AG04450 (cell line): ENCODE measurements at regions of chr15 and their contacts with region 1.

Region 1: DNA sequence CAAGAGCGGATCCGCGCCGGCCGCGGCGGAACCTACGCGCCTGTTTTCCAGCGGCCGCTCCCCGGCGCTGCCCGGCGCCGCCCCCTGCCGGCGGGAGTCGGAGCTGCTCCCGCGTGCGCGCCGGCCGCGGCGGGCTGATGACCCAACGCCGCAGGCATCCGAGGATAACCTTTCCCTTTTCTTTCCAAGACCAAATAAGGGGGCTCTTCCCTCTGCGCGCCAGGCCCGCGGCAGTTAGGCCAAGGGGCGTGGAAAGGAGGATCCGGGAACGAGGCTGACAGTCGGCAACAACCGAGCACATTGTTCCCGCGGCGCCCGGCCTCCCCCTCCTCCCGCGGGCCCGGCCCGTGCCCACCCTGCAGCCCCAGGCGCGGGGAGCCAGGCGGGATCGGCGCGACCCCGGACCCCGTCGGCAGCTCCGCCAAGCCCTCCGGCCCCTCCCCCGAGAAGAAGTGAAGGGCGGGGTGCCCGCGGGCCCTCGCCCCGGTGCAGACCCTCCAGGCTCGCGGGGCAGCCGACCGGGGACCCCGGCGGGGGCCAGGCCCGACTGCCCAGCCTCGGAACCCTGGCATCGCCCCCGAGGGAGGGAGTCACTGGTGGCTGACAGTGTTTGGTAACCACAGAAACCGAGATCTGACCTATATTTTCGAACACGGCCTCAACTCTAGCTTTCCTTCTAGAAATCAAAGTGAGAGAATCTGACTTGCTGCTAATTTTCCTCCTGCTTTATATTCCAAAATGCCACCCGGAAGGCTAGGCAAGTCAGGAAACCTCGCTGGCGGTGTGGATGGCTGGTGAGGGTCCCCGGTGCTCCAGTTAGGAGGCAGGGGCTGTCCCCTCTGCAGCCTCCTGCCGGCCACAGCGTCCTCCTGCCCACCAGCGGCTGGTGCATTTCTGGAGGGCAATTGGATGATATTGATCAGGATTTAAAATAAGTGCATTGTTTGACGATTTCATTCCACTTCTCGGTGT is 45.6 kb upstream of the SYNM start:
- DNase-seq: peak; percentile 77
- H3K4me3 ChIP-seq: peak overlapping the region; percentile 57
- H3K27ac ChIP-seq: peak overlapping the region; percentile 52
- H3K27me3 ChIP-seq: no peaks in the 10 kb centered on the region
- CTCF ChIP-seq: peak; percentile 50

Region 2: GRCh38 chr15:98968576-98968975 is 90.7 kb before region 1 on chr15:
- CTCF ChIA-PET with region 1: interaction called, 10 read pairs
- POLR2A ChIA-PET with region 1: interaction called, 4 read pairs
- DNase-seq: no peak
- H3K4me3 ChIP-seq: no peak overlapping the region
- H3K27ac ChIP-seq: no peak overlapping the region
- H3K27me3 ChIP-seq: no peaks in the 10 kb centered on the region
- CTCF ChIP-seq: no peak

Region 3: GRCh38 chr15:98976500-98976899 is 82.8 kb before region 1 on chr15:
- CTCF ChIA-PET with region 1: interaction called, 10 read pairs
- POLR2A ChIA-PET with region 1: interaction called, 11 read pairs
- DNase-seq: no peak
- H3K4me3 ChIP-seq: no peak overlapping the region
- H3K27ac ChIP-seq: no peak overlapping the region
- H3K27me3 ChIP-seq: no peaks in the 10 kb centered on the region
- CTCF ChIP-seq: no peak

Region 4: GRCh38 chr15:99155961-99156450 is 96.7 kb after region 1 on chr15:
- CTCF ChIA-PET with region 1: no interaction called
- POLR2A ChIA-PET with region 1: no interaction called
- DNase-seq: no peak
- H3K4me3 ChIP-seq: no peak overlapping the region
- H3K27ac ChIP-seq: no peak overlapping the region
- H3K27me3 ChIP-seq: no peaks in the 10 kb centered on the region
- CTCF ChIP-seq: no peak